ENCODE measurements at regions of chr2 and their contacts with region 1.

Region 1: DNA sequence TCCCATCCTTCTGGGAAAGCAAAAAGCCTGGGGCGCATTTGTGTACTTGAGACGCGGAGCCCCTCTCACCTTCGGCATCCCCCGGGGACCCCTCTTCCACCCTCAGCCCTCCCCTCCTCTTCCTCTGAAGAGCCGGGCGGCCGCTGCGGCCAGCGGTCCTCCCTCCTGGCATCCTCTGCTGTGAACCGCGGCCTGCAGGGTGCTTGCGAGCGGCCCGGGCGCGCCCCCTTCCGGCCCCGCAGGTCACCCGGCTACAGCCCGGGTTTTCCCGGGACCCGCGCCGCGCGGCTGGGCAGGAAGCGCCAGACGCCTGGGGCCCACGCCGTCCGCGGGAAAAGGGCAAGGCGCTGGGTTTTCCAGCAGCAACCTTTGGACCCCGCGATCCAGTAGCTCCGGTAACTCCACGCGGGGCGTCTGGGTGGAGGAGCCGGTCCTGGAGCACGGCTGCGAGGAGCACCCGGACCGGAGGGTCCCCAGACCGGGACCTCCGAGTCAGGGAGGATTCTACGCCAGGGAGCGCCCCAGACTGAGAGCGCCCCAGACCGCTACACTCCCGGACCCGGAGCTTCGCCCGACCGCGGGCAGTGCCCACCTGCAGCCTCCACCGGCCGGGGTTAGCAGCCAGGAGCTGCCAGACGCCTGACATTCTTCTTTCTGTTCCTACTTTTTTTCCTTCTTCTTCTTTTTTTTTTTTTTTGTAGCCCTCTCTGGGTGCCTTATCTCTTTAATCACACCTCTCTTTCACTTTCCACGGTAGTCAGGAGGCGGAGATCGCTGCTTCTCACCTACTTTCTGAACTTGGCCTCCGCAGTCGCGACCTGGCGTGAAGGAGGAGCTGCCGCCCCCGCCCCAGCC is at the start of gene IL18R1:
- DNase-seq: peak; percentile 75
- H3K4me3 Mint-ChIP-seq: peak within 1 kb of the TSS; percentile 98
- H3K27ac Mint-ChIP-seq: peak within 1 kb of the TSS; percentile 87
- H3K4me1 Mint-ChIP-seq: peaks cover 44% of the 10 kb centered on the region
- H3K27me3 Mint-ChIP-seq: no peaks in the 10 kb centered on the region
- total RNA-seq, gene IL18R1: 22.8 to 24.0 TPM

Region 2: GRCh38 chr2:102251042-102251848 is 104.5 kb before region 1 on chr2:
- CTCF ChIA-PET with region 1: interaction called, 9 read pairs
- POLR2A ChIA-PET with region 1: interaction called, 10 read pairs
- DNase-seq: peak; percentile 69
- H3K4me3 Mint-ChIP-seq: peak overlapping the region; percentile 76
- H3K27ac Mint-ChIP-seq: peak overlapping the region; percentile 61
- H3K4me1 Mint-ChIP-seq: peaks cover 41% of the 10 kb centered on the region
- H3K27me3 Mint-ChIP-seq: peaks cover 6% of the 10 kb centered on the region

Region 3: DNA sequence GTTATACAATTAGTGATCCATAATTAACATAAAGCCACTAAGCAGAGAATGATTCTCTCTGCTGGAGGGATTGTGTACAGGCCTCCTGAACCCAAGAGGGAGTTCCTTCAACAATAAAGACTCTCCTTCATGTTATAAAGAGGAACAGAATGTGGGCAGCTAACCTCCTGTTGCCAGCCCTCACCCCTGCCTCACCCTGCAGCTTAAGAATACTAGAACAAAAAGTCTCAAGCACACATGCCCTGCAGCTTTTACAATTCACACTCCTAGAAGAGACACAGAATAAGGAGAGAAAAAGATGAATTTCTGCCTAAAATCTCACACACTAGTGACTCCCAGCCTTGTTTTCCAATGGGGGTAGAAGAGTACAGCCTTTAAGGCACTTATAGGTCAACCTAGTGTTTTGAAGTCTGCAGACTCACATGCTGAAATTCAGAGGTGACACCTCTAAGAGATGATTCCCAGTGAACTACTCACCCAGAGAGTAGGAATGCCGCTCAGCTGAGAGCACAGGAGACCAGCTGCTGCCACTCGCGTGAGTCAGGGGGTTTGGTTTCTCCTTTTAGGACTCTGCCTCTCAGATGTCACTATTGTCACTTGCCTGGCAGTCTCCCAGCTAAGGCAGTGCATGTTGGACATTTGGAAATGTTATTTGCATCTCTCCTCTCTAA is 76.9 kb before region 1 on chr2:
- CTCF ChIA-PET with region 1: no interaction called
- POLR2A ChIA-PET with region 1: interaction called, 10 read pairs
- DNase-seq: no peak
- H3K4me3 Mint-ChIP-seq: no peak overlapping the region
- H3K27ac Mint-ChIP-seq: no peak overlapping the region
- H3K4me1 Mint-ChIP-seq: peaks cover 52% of the 10 kb centered on the region
- H3K27me3 Mint-ChIP-seq: peaks cover 1% of the 10 kb centered on the region

Region 4: DNA sequence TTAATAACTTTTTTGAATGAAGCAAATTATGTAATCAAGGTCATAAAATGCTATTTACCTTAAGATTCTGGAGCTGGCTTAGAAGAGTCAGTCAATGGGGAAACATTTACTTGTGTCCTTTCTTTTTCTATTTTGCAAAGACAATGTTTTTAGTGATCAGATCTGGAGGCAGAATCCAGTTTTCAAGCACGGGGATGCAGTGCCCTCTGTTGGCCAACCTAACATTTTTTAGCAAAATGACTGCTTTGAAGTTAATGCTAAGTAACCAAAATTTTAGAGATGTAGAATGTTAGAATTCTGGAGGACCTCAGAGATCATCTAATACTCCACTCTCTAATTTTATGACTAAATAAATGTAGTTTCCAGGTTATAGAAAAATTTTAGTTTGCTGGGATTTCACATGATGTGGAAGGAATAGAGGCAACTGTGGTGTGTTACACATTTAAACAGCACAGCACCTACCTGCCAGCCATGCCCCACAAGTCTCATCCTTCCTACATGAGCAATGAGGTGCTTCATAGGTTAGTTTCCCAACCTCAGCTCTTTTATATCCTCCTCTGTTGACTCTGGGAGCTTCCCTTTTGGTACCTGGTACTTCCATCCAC is 93.7 kb after region 1 on chr2:
- CTCF ChIA-PET with region 1: interaction called, 15 read pairs
- POLR2A ChIA-PET with region 1: no interaction called
- DNase-seq: peak; percentile 74
- H3K4me3 Mint-ChIP-seq: no peak overlapping the region
- H3K27ac Mint-ChIP-seq: no peak overlapping the region
- H3K4me1 Mint-ChIP-seq: no peaks in the 10 kb centered on the region
- H3K27me3 Mint-ChIP-seq: no peaks in the 10 kb centered on the region

Measured in activated CD4-positive, alpha-beta memory T cell treated with anti-CD3 and anti-CD28 coated beads, Interleukin-2, amount 10 ng/mL, durations not matched to agents 7 days and 5 days (primary cell).